ENCODE measurements at regions of chr13 and their contacts with region 1.

Region 1: DNA sequence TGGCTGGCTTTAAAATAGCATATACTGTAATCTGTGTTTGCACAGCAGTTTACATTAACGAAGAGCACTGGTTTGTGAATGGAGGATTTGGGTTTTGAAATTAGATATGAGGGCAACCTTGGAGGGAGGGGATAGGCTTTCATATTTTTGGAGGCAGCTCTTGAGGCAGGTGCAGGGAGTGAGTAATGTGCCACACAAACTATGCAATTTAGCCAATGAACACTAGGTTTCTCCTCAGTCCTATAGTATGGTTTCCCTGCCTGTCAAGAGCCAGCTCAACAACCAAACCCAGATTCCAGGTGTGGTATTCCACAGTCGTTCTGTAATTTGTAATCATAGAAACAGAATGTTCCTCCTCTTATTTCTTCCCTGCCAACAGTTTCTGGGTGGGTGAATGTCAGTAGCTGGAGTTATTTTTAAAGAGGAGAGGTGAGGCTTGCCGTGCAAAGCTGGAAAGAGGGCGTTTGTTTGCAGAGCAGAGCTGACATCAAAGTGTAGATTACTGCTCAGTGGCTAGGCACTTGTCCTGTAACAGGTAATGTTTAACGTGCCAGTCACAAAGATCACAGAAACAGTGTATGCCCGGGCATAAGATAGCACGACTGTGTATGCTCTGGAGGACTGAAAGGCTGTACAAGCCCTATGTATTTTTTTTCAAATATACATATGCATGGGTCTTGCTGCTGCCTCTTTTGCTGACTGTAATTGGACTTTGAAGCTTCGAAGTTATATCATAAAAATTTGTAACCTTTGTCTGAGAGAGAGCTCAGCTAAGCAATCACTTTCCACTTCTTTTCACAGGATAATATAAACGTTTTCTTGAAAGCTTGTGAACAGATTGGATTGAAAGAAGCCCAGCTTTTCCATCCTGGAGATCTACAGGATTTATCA is 124.2 kb downstream of the LMO7 start:
- DNase-seq: peak; percentile 81
- H3K4me3 Mint-ChIP-seq: peak overlapping the region; percentile 80
- H3K27ac Mint-ChIP-seq: peak overlapping the region; percentile 99
- H3K4me1 Mint-ChIP-seq: peaks cover 44% of the 10 kb centered on the region
- H3K27me3 Mint-ChIP-seq: no peaks in the 10 kb centered on the region
- CTCF ChIP-seq: peak; percentile 28

Region 2: GRCh38 chr13:75226733-75227435 is 533.5 kb before region 1 on chr13:
- CTCF ChIA-PET with region 1: no interaction called
- POLR2A ChIA-PET with region 1: no interaction called
- intact Hi-C with region 1: no loop called
- DNase-seq: peak; percentile 92
- H3K4me3 Mint-ChIP-seq: peak overlapping the region; percentile 64
- H3K27ac Mint-ChIP-seq: peak overlapping the region; percentile 93
- H3K4me1 Mint-ChIP-seq: peaks cover 46% of the 10 kb centered on the region
- H3K27me3 Mint-ChIP-seq: no peaks in the 10 kb centered on the region
- CTCF ChIP-seq: no peak

Region 3: DNA sequence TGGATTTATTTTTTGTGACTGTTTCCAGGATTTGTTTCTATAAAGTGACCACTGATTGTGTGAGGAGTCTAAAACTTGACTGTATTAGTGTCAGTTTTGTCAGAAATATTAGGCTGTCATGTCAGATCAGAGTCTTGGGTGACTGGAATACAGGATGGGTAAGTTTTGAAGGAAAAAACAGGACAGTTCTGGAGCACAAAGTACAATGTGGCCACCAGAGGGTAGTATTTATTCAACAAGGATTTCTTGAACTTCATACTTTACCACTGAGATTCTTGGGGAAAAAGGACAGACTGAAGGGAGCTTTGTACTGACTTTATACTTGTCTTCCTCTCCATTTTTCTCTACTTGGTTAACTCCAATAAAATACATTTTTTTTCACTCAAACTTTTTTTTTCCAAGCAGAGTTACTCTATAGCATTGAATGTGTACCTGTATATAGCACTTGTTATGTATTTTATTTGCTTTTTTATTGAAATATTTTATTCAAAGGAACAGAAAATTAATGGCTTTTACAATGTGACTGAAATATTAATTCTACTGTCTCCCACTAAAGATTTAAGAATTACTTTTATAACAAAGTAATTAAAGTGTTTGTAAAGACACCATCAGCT is 73.1 kb before region 1 on chr13:
- CTCF ChIA-PET with region 1: interaction called, 28 read pairs
- POLR2A ChIA-PET with region 1: interaction called, 6 read pairs
- intact Hi-C with region 1: no loop called
- DNase-seq: peak; percentile 59
- H3K4me3 Mint-ChIP-seq: no peak overlapping the region
- H3K27ac Mint-ChIP-seq: no peak overlapping the region
- H3K4me1 Mint-ChIP-seq: peaks cover 18% of the 10 kb centered on the region
- H3K27me3 Mint-ChIP-seq: no peaks in the 10 kb centered on the region
- CTCF ChIP-seq: peak; percentile 49

Region 4: DNA sequence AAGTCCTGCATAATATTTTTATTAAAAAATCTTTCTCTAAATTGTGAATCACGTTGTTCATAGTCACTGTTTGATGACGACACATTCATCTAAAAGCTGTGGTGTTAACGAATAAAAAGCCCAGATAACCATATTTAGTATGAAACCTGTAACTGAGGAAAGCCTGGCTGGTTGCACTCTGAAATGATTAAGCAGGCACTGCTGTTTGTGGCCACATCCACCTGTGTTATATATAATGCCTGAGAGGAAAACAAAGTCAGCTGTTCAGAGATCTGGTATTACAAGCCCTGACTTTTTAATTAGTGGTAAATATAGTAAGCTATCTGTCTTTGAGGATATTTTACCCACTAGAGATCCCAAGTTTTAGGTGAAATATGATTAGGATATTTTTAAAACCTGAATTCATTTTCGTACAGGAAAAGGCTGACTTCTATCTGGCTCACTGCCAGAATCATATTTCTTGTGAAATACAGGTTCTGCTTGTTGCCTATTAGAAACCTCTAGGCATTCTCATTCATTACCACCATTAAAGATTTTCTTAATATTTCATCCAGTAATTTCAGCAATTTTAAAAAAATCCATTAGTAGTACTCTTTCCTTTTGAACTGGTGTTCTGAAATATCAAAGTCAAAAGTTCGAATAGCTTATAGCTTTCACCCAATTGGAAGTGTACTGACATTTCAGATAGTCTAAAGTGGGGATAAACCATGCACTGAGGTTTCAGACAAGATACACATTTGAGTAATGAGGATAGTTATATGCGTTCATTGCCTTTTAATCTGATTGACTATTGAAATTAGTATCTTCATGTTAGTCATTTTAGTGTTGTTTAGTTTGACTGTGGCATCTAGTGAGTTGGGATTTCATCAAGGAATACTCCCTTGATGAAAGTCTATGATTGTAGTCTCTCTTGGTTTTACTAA is 44.5 kb before region 1 on chr13:
- CTCF ChIA-PET with region 1: interaction called, 12 read pairs
- POLR2A ChIA-PET with region 1: interaction called, 94 read pairs
- intact Hi-C with region 1: loop called (anchors 1 kb)
- DNase-seq: peak; percentile 71
- H3K4me3 Mint-ChIP-seq: no peak overlapping the region
- H3K27ac Mint-ChIP-seq: peak overlapping the region; percentile 91
- H3K4me1 Mint-ChIP-seq: peaks cover 9% of the 10 kb centered on the region
- H3K27me3 Mint-ChIP-seq: no peaks in the 10 kb centered on the region
- CTCF ChIP-seq: no peak

Region 5: GRCh38 chr13:75739244-75739868 is 21.0 kb before region 1 on chr13:
- CTCF ChIA-PET with region 1: interaction called, 4 read pairs
- POLR2A ChIA-PET with region 1: interaction called, 12 read pairs
- intact Hi-C with region 1: no loop called
- DNase-seq: no peak
- H3K4me3 Mint-ChIP-seq: no peak overlapping the region
- H3K27ac Mint-ChIP-seq: no peak overlapping the region
- H3K4me1 Mint-ChIP-seq: peaks cover 13% of the 10 kb centered on the region
- H3K27me3 Mint-ChIP-seq: no peaks in the 10 kb centered on the region
- CTCF ChIP-seq: no peak

Region 6: GRCh38 chr13:75782985-75783384 is 22.6 kb after region 1 on chr13:
- CTCF ChIA-PET with region 1: interaction called, 4 read pairs
- POLR2A ChIA-PET with region 1: interaction called, 27 read pairs
- intact Hi-C with region 1: no loop called
- DNase-seq: no peak
- H3K4me3 Mint-ChIP-seq: no peak overlapping the region
- H3K27ac Mint-ChIP-seq: no peak overlapping the region
- H3K4me1 Mint-ChIP-seq: no peaks in the 10 kb centered on the region
- H3K27me3 Mint-ChIP-seq: no peaks in the 10 kb centered on the region
- CTCF ChIP-seq: no peak

Region 7: GRCh38 chr13:75803164-75803611 is 42.8 kb after region 1 on chr13:
- CTCF ChIA-PET with region 1: interaction called, 5 read pairs
- POLR2A ChIA-PET with region 1: interaction called, 14 read pairs
- intact Hi-C with region 1: no loop called
- DNase-seq: no peak
- H3K4me3 Mint-ChIP-seq: no peak overlapping the region
- H3K27ac Mint-ChIP-seq: no peak overlapping the region
- H3K4me1 Mint-ChIP-seq: no peaks in the 10 kb centered on the region
- H3K27me3 Mint-ChIP-seq: no peaks in the 10 kb centered on the region
- CTCF ChIP-seq: no peak

Region 8: DNA sequence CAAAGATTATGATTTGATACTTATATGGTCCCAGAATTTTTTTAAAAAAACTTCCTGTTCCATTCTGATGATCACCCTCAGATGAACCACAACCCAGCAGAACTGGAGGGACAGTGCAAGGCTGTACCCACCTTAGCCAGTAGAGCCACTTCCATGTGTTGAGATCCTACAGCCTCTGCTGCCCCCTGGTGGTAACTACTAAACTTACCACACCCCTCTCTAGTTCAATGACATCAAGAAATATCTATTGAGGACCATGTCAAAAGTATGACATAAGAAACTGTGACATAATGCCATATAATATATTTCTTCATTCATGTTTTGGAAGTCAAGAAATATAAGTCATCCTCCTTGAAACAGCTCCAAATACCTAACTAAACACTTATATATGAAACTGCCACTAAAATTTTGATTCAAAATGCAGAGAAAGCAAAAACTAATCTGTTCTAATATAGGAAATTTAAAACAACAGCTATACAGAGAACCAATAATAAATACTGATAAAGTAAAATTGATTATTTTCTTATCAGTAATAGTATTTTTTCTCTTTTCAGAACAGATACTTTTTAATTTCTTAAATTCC is 713.3 kb after region 1 on chr13:
- CTCF ChIA-PET with region 1: no interaction called
- POLR2A ChIA-PET with region 1: no interaction called
- intact Hi-C with region 1: loop called (anchors 5 kb)
- DNase-seq: peak; percentile 86
- H3K4me3 Mint-ChIP-seq: no peak overlapping the region
- H3K27ac Mint-ChIP-seq: no peak overlapping the region
- H3K4me1 Mint-ChIP-seq: no peaks in the 10 kb centered on the region
- H3K27me3 Mint-ChIP-seq: no peaks in the 10 kb centered on the region
- CTCF ChIP-seq: peak; percentile 87

Measured in MCF 10A (cell line).